ENCODE measurements at regions of chr7 and their contacts with region 1.

Region 1: GRCh38 chr7:98168181-98168905 is 42.9 kb upstream of the BHLHA15 start:
- DNase-seq: peak in 1 of 2 donors; percentile 46
- ATAC-seq: peak in 7 of 8 donors; percentile 34 to 72 (median 62)
- H3K4me3 ChIP-seq: no peak overlapping the region
- H3K27ac ChIP-seq: no peak overlapping the region
- H3K4me1 ChIP-seq: peaks cover 0 to 33% (median 9%) of the 10 kb centered on the region in 9 donors
- H3K27me3 ChIP-seq: no peaks in the 10 kb centered on the region
- CTCF ChIP-seq: peak; percentile 65 to 94 (median 85)

Region 2: GRCh38 chr7:98021588-98022351 is 146.6 kb before region 1 on chr7:
- intact Hi-C with region 1: loop called (anchors 1 to 5 kb)
- DNase-seq: peak; percentile 64 to 80
- ATAC-seq: peak; percentile 59 to 90 (median 81)
- H3K4me3 ChIP-seq: no peak overlapping the region
- H3K27ac ChIP-seq: no peak overlapping the region
- H3K4me1 ChIP-seq: peaks cover 0 to 4% (median 0%) of the 10 kb centered on the region in 9 donors
- H3K27me3 ChIP-seq: peaks cover 0 to 27% (median 5%) of the 10 kb centered on the region in 7 donors
- CTCF ChIP-seq: peak; percentile 82 to 97 (median 92)

Region 3: DNA sequence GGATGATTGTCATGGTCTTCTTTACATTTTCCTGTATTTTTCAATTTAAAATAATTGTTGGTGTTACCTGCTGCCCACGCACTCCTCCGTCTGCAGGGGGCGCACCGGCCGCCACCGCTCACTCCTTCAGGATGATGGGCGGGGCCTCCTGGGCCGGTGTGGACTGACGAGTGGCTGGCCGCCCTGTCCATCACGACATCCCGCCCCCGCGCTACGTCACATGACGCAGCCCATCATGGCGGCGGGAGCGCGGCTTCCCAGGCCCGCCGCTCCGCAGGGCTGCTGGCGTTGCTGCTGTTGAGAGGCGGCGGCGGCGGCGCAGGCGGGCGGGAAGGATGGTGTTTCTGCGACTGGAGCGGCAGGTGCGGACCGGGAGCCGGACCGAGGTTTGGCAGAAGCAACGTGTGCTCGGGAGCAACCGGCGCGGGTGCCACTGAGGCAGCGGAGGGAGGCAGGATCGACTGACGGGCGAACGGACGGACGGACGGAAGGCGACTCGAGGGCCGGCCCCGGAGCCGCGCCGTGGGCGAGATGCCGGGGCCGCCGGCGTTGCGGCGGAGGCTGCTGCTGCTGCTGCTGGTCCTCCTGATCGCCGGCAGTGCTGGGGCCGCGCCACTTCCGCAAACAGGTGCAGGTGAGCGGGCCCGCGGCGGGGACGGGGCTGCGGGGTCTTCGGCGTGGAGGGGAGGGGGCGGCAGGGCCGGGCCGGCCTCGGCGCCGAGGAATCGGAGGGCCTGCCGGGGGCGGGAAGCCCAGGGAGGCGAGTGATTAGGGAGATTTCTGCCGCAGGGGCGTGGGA is 61.5 kb before region 1 on chr7 and contains the start of gene LMTK2:
- intact Hi-C with region 1: loop called (anchors 1 to 5 kb)
- DNase-seq: peak; percentile 93 to 96
- ATAC-seq: peak; percentile 99 to 100 (median 100)
- H3K4me3 ChIP-seq: peak within 1 kb of the TSS; percentile 75 to 100 (median 97)
- H3K27ac ChIP-seq: peak within 1 kb of the TSS; percentile 81 to 93 (median 86)
- H3K4me1 ChIP-seq: peaks cover 6 to 46% (median 37%) of the 10 kb centered on the region in 9 donors
- H3K27me3 ChIP-seq: peaks cover 0 to 4% (median 0%) of the 10 kb centered on the region in 7 donors
- CTCF ChIP-seq: peak; percentile 92 to 99 (median 97)
- total RNA-seq, gene LMTK2: 15.9 to 50.2 (median 33.6) TPM

Region 4: DNA sequence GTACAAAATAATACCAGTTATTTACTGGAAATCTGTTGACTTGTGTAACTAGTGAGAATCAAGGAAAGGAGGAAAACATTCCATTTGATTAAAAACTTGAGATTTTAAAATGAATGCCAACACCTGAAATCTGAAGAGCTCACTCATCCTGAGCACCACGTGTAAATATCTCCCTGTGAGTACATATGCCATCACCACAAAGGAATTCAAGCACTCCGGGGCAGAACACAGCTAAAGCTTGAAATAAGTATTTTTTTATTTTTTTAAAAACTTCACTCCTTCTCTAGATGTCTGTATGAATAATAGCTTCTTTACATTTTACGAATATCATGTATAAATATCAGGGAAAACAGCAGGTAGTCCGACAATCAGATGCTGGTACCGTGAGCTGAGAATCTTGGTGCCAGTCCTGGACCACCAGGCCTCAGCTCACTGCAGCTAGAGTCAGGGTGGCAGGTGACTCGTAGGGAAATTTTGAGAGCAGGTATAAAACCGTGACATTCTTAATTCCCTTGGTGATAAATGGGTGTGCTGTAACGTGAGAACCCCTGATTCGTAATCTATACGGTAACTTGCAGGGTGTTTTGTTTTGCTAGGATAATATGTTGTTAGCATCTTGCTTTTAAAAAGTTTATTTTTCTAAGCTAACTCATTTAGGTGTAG is 49.0 kb before region 1 on chr7:
- intact Hi-C with region 1: loop called in 1 of 10 experiments (anchors 1 kb)
- DNase-seq: no peak
- ATAC-seq: peak in 4 of 8 donors; percentile 52 to 56 (median 54)
- H3K4me3 ChIP-seq: no peak overlapping the region
- H3K27ac ChIP-seq: peak overlapping the region in 5 of 10 donors; percentile 9 to 72 (median 64)
- H3K4me1 ChIP-seq: peaks cover 0 to 57% (median 27%) of the 10 kb centered on the region in 9 donors
- H3K27me3 ChIP-seq: peaks cover 0 to 14% (median 0%) of the 10 kb centered on the region in 7 donors
- CTCF ChIP-seq: no peak

Region 5: GRCh38 chr7:98133181-98133580 is 35.2 kb before region 1 on chr7:
- intact Hi-C with region 1: no loop called
- DNase-seq: no peak
- ATAC-seq: peak in 3 of 8 donors; percentile 19 to 44 (median 22)
- H3K4me3 ChIP-seq: no peak overlapping the region
- H3K27ac ChIP-seq: peak overlapping the region in 1 of 10 donors; percentile 77
- H3K4me1 ChIP-seq: peaks cover 4 to 72% (median 35%) of the 10 kb centered on the region in 9 donors
- H3K27me3 ChIP-seq: peaks cover 0 to 35% (median 0%) of the 10 kb centered on the region in 7 donors
- CTCF ChIP-seq: no peak

Region 6: DNA sequence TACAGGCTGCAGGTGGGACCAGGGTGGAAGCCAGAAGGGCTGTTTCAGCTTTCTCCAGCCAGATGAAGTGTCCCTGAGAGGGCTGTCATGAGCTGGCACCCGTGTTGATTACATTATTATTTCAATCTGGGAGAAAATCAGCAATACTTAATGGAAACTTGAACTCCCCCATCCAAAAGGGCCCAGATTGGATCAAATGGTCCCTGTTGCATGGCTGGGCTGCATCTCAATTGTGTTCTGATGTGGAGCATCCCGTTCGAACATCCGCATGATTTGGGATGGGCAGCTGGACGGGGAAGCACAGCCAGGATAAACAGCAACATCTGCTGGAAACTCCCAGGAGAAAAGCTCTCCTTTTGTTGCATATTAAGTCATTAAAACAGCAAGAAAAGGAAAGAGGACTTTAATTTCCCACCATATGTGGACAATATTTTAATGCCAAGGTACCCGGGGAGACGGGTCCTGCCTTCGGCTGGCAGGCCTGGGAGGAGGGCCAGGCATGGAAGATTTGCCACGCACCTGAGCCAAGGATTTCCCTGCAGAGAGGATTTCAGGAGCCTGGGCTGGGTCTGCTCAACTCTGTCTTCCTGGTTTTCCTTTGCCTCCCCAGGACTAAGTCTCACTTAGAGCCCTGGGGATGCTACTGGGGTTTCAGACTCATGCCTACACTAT is 501.1 kb after region 1 on chr7:
- intact Hi-C with region 1: no loop called
- DNase-seq: peak in 1 of 2 donors; percentile 13
- ATAC-seq: peak in 2 of 8 donors; percentile 44 to 57
- H3K4me3 ChIP-seq: no peak overlapping the region
- H3K27ac ChIP-seq: no peak overlapping the region
- H3K4me1 ChIP-seq: no peaks in the 10 kb centered on the region
- H3K27me3 ChIP-seq: peaks cover 0 to 35% (median 18%) of the 10 kb centered on the region in 7 donors
- CTCF ChIP-seq: no peak